ENCODE measurements at regions of chr3 and their contacts with region 1.

Region 1: DNA sequence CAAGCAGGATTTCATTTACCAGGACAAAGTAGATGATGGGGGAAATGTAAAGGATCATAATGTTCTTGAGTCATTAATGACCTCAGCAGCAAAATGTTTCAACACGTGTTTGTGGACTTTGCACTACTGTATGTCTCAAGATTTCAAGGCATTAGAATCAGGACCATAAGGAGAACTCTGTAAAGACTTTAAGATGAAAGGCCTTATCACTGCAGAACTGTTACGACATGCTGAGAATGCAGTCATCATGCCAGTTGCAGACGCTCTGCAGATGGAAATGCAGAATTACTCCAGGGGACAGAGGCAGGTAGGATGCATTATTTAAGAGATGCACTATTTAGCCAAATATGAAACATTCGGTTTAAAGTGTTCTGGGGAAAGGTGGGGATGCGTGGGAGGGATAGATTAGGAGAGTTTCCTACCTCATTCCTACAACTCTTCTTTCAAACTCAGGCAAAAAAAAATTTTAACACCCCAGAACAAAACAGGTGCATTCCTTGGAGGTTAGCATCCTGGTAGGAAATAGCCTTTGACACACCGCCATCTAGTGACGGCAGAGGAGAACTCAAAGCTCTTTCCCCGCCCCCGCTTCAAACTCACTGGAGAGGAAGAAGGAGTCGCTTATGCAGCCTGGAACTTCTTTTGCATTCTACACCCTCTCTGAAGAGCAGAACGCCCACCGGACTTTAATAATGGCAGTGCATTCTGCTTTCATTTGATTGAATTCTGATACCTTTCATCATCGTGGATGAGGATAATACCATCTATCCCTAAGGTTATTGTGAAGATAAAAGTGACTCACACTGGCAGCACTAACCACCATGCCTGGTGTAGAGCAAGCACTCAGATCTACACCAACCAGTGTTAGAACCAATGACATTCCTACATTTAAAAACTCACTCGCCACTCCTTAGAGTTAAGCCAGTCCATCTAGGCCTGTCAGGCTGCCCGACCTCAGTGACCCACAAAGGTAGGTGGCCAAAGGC is 43.1 kb upstream of the TOPAZ1 start:
- DNase-seq: peak; percentile 42 to 93 (median 76)

Region 2: DNA sequence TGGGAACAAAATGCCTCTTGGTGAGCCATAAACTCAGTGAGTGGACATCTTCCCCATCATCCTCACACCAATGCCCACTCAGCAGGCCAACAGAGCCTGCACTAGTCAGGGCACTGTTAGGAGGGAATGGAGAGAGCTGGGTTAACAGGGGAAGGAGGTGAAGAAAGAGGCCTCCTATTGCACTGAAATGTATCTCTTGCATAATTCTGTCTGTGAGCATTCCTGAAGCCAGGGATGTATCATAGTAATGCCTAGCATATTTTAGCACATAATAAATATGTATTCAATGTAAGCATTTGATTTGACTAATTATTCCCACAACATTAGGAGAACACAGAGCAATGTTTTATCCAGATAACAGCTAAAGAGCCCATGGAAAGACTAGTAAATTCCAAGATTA is 658.0 kb before region 1 on chr3:
- intact Hi-C with region 1: loop called (anchors 2 kb)
- DNase-seq: no peak

Region 3: GRCh38 chr3:43769471-43770425 is 428.8 kb before region 1 on chr3:
- intact Hi-C with region 1: loop called (anchors 1 kb)
- DNase-seq: peak; percentile 75 to 98 (median 94)

Region 4: DNA sequence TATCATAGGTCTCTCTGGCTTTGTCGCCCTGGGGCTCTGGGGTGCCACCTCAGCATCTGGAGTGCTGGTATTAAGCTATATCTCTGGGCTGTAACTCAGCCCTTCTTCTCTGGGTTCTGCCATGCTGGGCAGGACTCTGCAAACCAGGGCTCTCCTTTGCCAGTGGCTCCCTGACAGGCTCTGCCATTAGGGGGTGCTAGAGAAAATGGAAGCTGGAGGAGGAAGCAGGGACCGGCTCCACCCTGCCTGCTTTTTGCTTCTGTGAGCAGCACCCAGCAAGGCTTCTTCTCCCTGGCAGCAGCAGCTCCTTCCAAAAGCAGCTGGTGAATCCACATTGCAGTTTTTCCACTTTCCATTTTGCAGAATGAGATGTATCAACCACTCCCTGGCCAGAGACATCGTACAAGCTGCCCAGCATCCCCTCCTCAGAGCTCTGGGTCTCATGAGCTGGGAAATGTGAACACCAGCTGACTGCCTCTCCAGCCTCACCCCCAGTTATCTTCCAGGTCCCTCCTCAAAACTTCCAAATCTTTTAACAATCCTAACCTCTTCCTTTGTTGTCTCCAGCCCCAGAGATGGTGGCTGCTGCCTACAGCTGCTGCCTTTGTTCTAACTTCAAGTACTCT is 342.8 kb before region 1 on chr3:
- intact Hi-C with region 1: loop called (anchors 5 kb)
- DNase-seq: peak; percentile 40 to 93 (median 66)

Region 5: DNA sequence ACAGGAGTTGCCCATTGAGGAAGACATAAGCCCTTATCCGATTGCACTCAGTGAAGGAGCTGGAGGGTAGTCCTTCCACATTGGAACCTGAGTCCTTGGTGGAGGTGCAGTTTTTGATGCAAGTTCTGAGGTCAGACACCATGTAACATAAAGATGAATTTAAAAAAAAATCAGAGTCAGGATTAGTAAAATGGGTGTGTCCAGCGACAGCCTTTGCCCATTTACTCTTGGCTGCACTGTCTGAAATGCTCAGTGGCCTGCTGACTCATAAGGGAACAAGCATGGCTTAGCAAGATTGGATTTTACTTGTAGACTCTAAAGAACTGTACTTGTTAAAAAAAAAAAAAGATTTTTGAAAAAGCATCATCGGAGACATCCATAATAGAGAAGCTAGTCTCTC is 198.0 kb before region 1 on chr3:
- intact Hi-C with region 1: loop called (anchors 10 kb)
- DNase-seq: no peak

Region 6: GRCh38 chr3:44264146-44264545 is 65.6 kb after region 1 on chr3:
- intact Hi-C with region 1: no loop called
- DNase-seq: no peak